ENCODE measurements at regions of chr2 and their contacts with region 1.

Region 1: DNA sequence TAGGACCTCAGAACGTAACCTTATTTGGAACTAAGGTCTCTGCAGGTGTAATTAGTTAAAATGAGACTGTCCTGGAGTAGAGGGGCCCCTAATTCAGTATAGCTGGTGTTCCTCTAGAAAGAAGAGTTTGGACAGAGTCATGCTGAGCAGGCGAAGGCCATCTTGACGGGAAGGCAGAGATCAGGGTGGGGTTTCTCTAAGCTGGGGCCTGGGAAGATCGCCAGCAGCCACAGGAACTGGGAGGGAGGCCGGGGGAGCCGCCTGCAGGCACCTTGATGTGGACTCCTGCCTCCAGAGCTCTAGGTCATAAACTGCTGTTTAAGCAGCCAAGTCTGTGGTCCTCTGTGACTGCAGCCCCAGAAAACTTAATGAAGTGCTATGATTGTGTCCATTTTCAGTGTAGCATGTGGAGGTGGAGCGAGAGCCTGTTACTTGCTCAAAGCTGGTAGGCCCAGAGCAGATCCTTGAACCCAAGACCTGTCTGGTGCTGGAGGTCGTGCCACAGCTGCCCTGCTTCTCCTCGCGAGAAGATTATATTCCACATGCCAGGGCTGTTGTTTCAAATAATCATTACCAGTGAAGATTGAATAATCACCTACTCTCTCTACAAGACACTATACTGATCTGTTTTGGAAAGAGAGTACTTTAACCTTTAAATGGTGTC is 105.7 kb downstream of the TPO start:
- DNase-seq: no peak
- ATAC-seq: peak; percentile 8

Region 2: DNA sequence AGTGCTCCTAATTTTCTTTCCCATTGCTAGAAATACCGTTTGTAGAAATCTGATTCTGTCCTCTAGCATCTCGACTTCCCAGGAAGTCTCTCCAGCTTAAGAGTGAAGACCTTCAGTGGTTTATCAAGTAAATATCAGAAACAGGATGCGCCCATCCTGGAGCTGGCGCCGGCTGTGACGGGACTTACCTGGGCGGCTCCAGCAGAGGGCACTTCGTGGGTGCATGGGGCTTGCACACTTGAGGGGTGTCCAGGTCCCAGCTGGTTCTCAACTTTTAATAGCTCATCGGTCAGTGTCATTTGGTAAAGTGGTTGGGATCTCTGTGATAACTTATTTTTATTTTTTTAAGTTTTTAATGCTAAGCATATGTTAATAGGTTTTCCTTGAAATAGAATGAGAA is 272.8 kb before region 1 on chr2:
- intact Hi-C with region 1: loop called (anchors 10 kb)
- DNase-seq: no peak
- ATAC-seq: no peak

Measured in Right ventricle myocardium inferior (tissue), 1 donor.